WTC11 (cell line): ENCODE measurements at regions of chr14 and their contacts with region 1.

Region 1: DNA sequence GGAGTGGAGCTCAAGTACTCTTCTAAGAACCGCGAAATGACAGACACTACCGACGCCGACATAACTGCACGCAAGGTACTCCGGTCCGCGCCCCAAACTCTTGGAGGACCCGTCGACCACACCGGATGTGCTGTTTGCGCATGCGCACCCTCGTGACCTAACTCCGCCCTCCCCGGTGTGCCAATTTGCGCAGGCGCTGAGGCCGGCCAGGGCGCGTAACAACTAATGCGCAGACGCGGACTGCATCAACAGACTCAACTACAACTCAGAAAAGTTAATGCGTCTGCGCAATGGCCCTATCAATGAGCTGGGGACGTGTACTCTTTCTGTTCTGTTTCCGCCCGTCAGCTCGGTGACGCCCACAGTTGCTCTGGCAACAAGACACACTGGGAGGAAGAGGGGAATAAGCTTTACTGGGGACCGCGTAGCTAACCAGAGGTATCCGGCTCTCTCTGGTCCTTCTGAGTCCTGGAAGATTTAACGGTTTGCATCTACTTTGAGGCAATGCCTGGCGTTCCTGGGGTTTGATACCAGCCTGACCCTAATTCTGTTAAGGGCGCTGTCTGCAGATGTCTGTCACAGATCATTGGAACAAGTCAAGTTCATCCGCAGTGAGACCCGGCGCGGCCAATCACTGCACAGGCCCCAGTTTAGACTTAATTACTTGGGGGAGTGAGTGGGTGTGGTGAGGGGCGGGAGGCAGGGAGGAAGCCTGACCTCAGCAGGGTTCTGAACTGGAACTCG is at the start of gene DAD1:
- DNase-seq: peak; percentile 99
- ATAC-seq: peak; percentile 92
- H3K4me3 Mint-ChIP-seq: peak within 1 kb of the TSS; percentile 98
- H3K27ac Mint-ChIP-seq: peak within 1 kb of the TSS; percentile 99
- H3K4me1 Mint-ChIP-seq: peaks cover 45% of the 10 kb centered on the region
- H3K27me3 Mint-ChIP-seq: peaks cover 3% of the 10 kb centered on the region; the same call in 1 of the 2 replicates
- CTCF ChIP-seq: no peak
- total RNA-seq, gene DAD1: 125 to 156 TPM (median 144 TPM) in 3 replicates

Region 2: GRCh38 chr14:22536853-22537338 is 52.4 kb before region 1 on chr14:
- CTCF ChIA-PET with region 1: no interaction called
- POLR2A ChIA-PET with region 1: no interaction called
- DNase-seq: no peak
- ATAC-seq: no peak; the same call in 1 of the 2 replicates
- H3K4me3 Mint-ChIP-seq: no peak overlapping the region
- H3K27ac Mint-ChIP-seq: no peak overlapping the region
- H3K4me1 Mint-ChIP-seq: peaks cover 4% of the 10 kb centered on the region
- H3K27me3 Mint-ChIP-seq: no peaks in the 10 kb centered on the region
- CTCF ChIP-seq: no peak

Region 3: DNA sequence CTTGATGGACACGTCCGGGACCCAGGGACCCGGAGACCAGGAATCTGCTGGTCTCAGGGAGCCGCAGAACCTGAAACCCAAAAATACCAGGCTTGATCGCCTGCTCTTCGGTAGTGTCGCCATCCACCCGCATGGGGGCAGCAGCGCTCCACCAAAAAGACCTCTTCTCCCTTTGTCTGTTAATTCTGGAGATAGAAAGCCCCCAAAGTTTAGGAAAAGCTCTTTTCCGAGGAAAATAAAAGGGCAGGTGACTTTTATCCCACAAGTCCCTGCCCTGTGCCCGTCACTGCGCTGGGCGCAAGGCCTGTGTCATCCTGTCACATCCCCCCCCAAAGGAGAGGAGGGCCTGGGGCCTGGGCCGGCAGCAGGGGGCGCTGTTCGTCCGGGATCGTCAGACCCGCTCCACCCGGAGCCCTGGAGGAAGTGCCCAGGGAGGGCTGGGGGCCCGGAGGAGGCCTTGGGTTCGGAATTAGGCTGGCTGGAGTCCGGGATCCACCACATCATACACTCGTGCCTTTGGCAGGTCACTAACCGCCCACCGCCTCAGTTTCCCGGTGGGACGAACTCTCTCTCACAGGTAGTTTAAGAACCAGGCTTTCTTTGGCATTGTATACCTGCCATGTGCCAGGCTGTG is 32.2 kb before region 1 on chr14:
- CTCF ChIA-PET with region 1: interaction called, 16 read pairs
- POLR2A ChIA-PET with region 1: interaction called, 6 read pairs
- DNase-seq: peak; percentile 94
- ATAC-seq: peak; percentile 78
- H3K4me3 Mint-ChIP-seq: peak overlapping the region; percentile 53
- H3K27ac Mint-ChIP-seq: 0 out of 2 replicates have a peak overlapping the region, but pooled peaks have one; percentile 49
- H3K4me1 Mint-ChIP-seq: peaks cover 46% of the 10 kb centered on the region
- H3K27me3 Mint-ChIP-seq: no peaks in the 10 kb centered on the region
- CTCF ChIP-seq: peak; percentile 100